IMR-90 (cell line): ENCODE measurements at regions of chr18 and their contacts with region 1.

Region 1: DNA sequence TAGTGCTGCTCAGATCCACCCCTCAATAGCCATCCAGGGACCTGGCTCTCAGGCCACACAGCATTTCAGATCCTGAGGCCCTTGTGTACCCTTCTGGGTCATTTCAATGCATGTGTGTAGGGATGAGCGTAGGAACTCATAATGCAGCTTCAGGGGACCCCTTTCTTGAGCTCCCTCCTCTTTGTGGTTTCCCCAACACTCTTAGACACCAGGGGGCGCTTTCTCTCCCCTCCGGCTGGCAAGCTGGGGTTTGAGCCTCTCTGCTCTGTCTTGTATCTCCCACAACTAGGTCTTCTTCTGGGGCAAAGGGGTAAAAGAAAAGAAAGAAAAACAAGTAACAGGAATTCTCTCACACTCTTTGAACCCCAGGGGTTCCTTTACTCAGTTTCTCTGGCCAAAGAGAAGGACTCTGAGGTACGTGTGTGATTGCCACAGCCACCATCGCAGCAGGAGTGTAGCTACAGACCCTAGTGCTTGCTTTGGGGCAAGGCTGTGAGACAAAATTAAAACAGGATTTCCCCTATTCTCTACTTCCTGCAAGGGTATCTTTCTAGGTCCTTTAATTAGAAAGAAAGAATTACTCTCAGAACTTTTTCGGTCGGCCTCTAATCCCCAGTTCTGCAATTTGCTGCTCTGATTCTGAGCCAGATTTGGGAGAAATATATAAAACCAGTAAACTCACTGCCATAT is 38.0 kb downstream of the CABYR start:
- DNase-seq: peak; percentile 56
- ATAC-seq: peak; percentile 68
- H3K4me3 ChIP-seq: no peak overlapping the region
- H3K27ac ChIP-seq: no peak overlapping the region
- H3K4me1 ChIP-seq: no peaks in the 10 kb centered on the region
- H3K27me3 ChIP-seq: no peaks in the 10 kb centered on the region
- CTCF ChIP-seq: peak; percentile 64
- POLR2A ChIP-seq: no peak
- RAD21 ChIP-seq: peak; percentile 65

Region 2: DNA sequence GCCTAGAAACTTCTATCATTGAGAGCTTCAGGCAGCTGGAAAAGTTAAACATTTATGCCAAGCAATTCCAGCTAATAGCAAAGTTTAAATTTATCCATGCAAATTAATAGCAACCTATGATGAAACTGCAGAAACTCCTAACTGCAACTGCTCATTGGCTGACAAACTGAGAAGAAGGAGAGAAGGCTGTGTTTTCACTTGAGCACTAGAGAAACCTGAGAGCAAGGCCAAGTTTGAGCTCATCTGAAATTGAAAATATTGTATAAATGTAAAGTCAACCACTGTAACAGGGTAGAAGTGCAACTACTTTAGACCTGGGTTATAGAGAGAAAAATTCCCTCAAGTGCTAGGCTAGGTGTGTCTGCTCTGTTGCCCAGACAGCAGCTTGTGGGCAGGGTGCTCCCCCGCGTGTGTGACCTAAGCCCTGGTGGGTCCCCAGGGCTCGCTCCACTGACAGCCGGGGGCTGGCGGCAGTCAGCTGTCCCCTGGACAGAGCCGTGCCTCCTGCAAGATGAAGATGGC is 12.2 kb after region 1 on chr18:
- CTCF ChIA-PET with region 1: interaction called, 12 read pairs
- POLR2A ChIA-PET with region 1: no interaction called
- dilution Hi-C with region 1: no loop called
- in situ Hi-C with region 1: no loop called
- intact Hi-C with region 1: no loop called
- DNase-seq: peak; percentile 70
- ATAC-seq: peak; percentile 85
- H3K4me3 ChIP-seq: no peak overlapping the region
- H3K27ac ChIP-seq: no peak overlapping the region
- H3K4me1 ChIP-seq: peaks cover 6% of the 10 kb centered on the region
- H3K27me3 ChIP-seq: no peaks in the 10 kb centered on the region
- CTCF ChIP-seq: no peak
- POLR2A ChIP-seq: no peak
- RAD21 ChIP-seq: no peak

Region 3: GRCh38 chr18:24271381-24272331 is 94.8 kb after region 1 on chr18:
- CTCF ChIA-PET with region 1: interaction called, 5 read pairs
- POLR2A ChIA-PET with region 1: no interaction called
- dilution Hi-C with region 1: no loop called
- in situ Hi-C with region 1: no loop called
- intact Hi-C with region 1: loop called (anchors 1 kb)
- DNase-seq: peak; percentile 72
- ATAC-seq: peak; percentile 84
- H3K4me3 ChIP-seq: peak overlapping the region; percentile 92
- H3K27ac ChIP-seq: peak overlapping the region; percentile 74
- H3K4me1 ChIP-seq: peaks cover 8% of the 10 kb centered on the region; the same call in 1 of the 2 replicates
- H3K27me3 ChIP-seq: no peaks in the 10 kb centered on the region
- CTCF ChIP-seq: peak; percentile 23; the same call in 1 of the 2 replicates
- POLR2A ChIP-seq: no peak
- RAD21 ChIP-seq: peak; percentile 18; the same call in 1 of the 2 replicates

Region 4: DNA sequence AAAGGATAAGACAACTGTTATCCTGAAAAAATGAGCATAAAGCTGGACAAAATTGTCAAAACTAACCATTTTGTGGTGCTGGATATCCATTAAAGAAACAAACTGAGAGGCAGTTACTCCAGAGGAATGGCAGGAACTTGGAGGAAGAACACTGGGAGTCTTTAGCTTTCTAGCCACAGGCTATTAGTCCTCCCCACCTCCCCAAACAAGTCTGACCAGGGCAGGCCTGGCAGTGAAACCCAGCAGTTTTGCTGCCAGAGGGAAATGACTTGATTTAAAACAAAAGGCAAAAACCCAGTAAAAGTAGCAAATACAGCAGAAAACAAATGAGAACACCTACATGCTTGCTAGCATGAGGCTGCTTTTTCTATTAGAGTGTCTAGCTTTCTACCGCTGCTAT is 185.9 kb after region 1 on chr18:
- CTCF ChIA-PET with region 1: no interaction called
- POLR2A ChIA-PET with region 1: no interaction called
- dilution Hi-C with region 1: no loop called
- in situ Hi-C with region 1: no loop called
- intact Hi-C with region 1: loop called (anchors 5 kb)
- DNase-seq: peak; percentile 6
- ATAC-seq: peak; percentile 66
- H3K4me3 ChIP-seq: no peak overlapping the region
- H3K27ac ChIP-seq: no peak overlapping the region
- H3K4me1 ChIP-seq: 0 out of 2 replicates have a peak, but pooled peaks cover 1% of the 10 kb centered on the region
- H3K27me3 ChIP-seq: no peaks in the 10 kb centered on the region
- CTCF ChIP-seq: no peak
- POLR2A ChIP-seq: no peak
- RAD21 ChIP-seq: no peak

Region 5: GRCh38 chr18:24413148-24413547 is 236.3 kb after region 1 on chr18:
- CTCF ChIA-PET with region 1: no interaction called
- POLR2A ChIA-PET with region 1: no interaction called
- dilution Hi-C with region 1: no loop called
- in situ Hi-C with region 1: no loop called
- intact Hi-C with region 1: loop called (anchors 2 kb)
- DNase-seq: no peak
- ATAC-seq: peak; percentile 71
- H3K4me3 ChIP-seq: no peak overlapping the region
- H3K27ac ChIP-seq: no peak overlapping the region
- H3K4me1 ChIP-seq: no peaks in the 10 kb centered on the region
- H3K27me3 ChIP-seq: peaks cover 15% of the 10 kb centered on the region
- CTCF ChIP-seq: peak; percentile 45
- POLR2A ChIP-seq: no peak
- RAD21 ChIP-seq: peak; percentile 54; the same call in 1 of the 2 replicates

Region 6: GRCh38 chr18:24763765-24764513 is 587.1 kb after region 1 on chr18:
- CTCF ChIA-PET with region 1: no interaction called
- POLR2A ChIA-PET with region 1: no interaction called
- dilution Hi-C with region 1: no loop called
- in situ Hi-C with region 1: no loop called
- intact Hi-C with region 1: no loop called
- DNase-seq: peak; percentile 96
- ATAC-seq: peak; percentile 80
- H3K4me3 ChIP-seq: no peak overlapping the region
- H3K27ac ChIP-seq: peak overlapping the region; percentile 82
- H3K4me1 ChIP-seq: peaks cover 20% of the 10 kb centered on the region
- H3K27me3 ChIP-seq: no peaks in the 10 kb centered on the region
- CTCF ChIP-seq: no peak
- POLR2A ChIP-seq: no peak
- RAD21 ChIP-seq: no peak